ENCODE measurements at regions of chr5 and their contacts with region 1.

Region 1: DNA sequence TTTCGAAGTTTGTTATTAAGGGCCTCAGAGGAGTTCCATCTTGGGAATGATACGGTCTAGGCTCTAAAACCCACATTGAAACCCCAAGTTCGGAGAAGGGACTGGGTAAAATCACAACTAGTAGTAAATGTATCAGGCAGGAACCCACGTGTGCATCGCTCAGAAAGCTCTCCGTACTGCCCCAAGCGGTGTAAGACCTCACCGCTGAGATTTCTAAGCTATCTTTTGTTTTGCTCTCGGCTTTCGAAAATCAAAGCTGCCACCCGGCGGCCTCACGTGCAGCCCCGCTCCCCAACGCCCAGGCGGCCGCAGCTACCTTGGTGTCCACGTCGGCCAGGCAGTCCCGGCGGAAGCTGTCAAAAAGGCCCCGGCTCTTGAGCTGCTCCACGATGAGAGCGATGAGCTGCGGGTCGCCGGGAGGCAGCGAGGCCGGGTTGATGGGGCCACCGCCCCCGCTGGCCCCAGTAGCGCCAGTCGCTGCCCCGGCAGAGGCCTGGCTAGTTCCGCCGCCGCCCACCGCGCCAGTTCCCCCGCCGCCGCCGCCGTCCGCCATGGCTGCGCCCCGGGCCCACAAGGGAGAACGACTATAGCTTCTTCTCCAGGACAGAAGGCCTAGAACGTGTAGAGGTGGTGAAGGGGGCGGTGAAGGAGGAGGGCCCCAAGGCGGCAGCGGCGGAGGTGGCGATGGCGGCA is 420 bp downstream of the BOD1 start:
- DNase-seq: peak; percentile 72 to 80
- ATAC-seq: peak; percentile 79 to 80
- H3K4me3 ChIP-seq: peak overlapping the region; percentile 88
- H3K27ac ChIP-seq: peak overlapping the region; percentile 92 to 98
- H3K4me1 ChIP-seq: peaks cover 40% of the 10 kb centered on the region
- CTCF ChIP-seq: peak; percentile 53
- EP300 ChIP-seq: no peak
- POLR2A ChIP-seq: no peak; the same call in 1 of the 2 replicates
- RAD21 ChIP-seq: peak in 1 of 2 experiments; percentile 37; a peak in 3 of 5 replicates

Region 2: GRCh38 chr5:172216345-172216744 is 1399.7 kb before region 1 on chr5:
- CTCF ChIA-PET with region 1: no interaction called
- POLR2A ChIA-PET with region 1: no interaction called
- DNase-seq: no peak
- ATAC-seq: peak in 1 of 2 experiments; percentile 36; a peak in 2 of 6 replicates
- H3K4me3 ChIP-seq: no peak overlapping the region
- H3K27ac ChIP-seq: no peak overlapping the region
- H3K4me1 ChIP-seq: peaks cover 13% of the 10 kb centered on the region
- CTCF ChIP-seq: no peak
- EP300 ChIP-seq: no peak
- POLR2A ChIP-seq: no peak
- RAD21 ChIP-seq: no peak

Region 3: GRCh38 chr5:173331956-173332479 is 284.0 kb before region 1 on chr5:
- CTCF ChIA-PET with region 1: interaction called, 16 read pairs
- POLR2A ChIA-PET with region 1: interaction called, 9 read pairs
- DNase-seq: peak; percentile 79 to 87
- ATAC-seq: peak in 1 of 2 experiments; percentile 69; a peak in 3 of 6 replicates
- H3K4me3 ChIP-seq: no peak overlapping the region
- H3K27ac ChIP-seq: peak overlapping the region; percentile 88 to 97; a peak in 5 of 6 replicates
- H3K4me1 ChIP-seq: peaks cover 23% of the 10 kb centered on the region
- CTCF ChIP-seq: peak; percentile 73
- EP300 ChIP-seq: no peak
- POLR2A ChIP-seq: no peak
- RAD21 ChIP-seq: peak; percentile 84 to 93

Region 4: DNA sequence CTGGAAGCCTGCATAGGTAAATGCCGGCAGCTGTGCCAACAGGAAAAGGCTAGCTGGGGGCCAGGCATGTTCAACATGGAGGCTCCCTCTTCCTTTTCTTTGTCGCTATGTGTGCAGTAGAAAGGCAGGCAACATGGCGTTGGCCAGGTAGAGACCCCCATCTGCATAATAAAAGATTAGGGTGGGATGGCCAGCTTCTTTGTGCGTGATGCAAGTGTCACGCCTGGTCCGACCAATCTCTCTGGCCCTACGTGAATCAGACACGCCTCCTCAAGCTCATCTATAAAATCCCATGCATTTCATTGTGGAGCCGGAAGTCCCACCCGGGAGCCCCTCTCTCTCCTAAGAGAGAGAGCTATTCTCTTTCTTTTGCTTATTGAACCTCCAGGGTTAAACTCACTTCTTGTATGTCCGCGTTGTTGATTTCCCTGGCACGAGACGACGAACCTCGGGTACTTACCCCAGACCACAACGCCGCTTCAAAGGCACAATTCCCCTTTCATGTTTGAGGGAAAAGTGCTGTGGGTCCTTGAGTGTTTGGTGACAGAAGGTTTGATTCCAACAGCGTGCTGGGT is 347.9 kb after region 1 on chr5:
- CTCF ChIA-PET with region 1: interaction called, 229 read pairs
- POLR2A ChIA-PET with region 1: interaction called, 6 read pairs
- DNase-seq: peak in 1 of 2 experiments; percentile 75
- ATAC-seq: peak; percentile 69 to 78
- H3K4me3 ChIP-seq: peak overlapping the region; percentile 23
- H3K27ac ChIP-seq: peak overlapping the region; percentile 72 to 81
- H3K4me1 ChIP-seq: peaks cover 30% of the 10 kb centered on the region
- CTCF ChIP-seq: no peak
- EP300 ChIP-seq: no peak
- POLR2A ChIP-seq: peak; percentile 26; the same call in 1 of the 2 replicates
- RAD21 ChIP-seq: no peak

Region 5: GRCh38 chr5:173984218-173984617 is 368.2 kb after region 1 on chr5:
- CTCF ChIA-PET with region 1: interaction called, 36 read pairs
- POLR2A ChIA-PET with region 1: no interaction called
- DNase-seq: peak in 1 of 2 experiments; percentile 49
- ATAC-seq: peak; percentile 73 to 74
- H3K4me3 ChIP-seq: no peak overlapping the region
- H3K27ac ChIP-seq: no peak overlapping the region
- H3K4me1 ChIP-seq: no peaks in the 10 kb centered on the region
- CTCF ChIP-seq: peak; percentile 43
- EP300 ChIP-seq: no peak
- POLR2A ChIP-seq: no peak; the same call in 1 of the 2 replicates
- RAD21 ChIP-seq: peak; percentile 65 to 72

Region 6: GRCh38 chr5:174311531-174312269 is 695.7 kb after region 1 on chr5:
- CTCF ChIA-PET with region 1: interaction called, 29 read pairs
- POLR2A ChIA-PET with region 1: no interaction called
- DNase-seq: peak; percentile 54 to 61
- ATAC-seq: peak; percentile 63 to 94
- H3K4me3 ChIP-seq: peak overlapping the region; percentile 31; the same call in 2 of the 3 replicates
- H3K27ac ChIP-seq: peak overlapping the region; percentile 29 to 75; a peak in 4 of 6 replicates
- H3K4me1 ChIP-seq: no peaks in the 10 kb centered on the region
- CTCF ChIP-seq: peak; percentile 90
- EP300 ChIP-seq: no peak
- POLR2A ChIP-seq: no peak
- RAD21 ChIP-seq: peak; percentile 73 to 93